A549 (cell line): ENCODE measurements at regions of chr12 and their contacts with region 1.

Region 1: DNA sequence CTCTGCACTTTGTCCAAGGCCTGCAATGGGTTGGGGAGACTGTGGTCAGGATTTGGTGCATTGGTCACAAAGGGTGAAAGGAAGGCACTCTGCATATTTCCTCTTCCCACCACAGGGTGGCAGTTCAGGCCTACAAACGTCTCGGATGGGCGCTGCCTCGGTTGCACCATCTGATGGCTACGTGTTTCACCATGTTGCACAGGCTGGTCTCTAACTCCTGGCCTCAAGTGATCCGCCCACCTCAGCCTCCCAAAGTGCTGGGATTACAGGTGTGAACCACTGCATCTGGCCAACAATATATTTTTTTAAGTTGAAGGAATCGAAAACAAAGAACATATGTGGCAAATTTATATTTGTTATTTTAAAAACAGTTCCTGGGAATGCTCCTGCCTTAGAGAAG is 35.1 kb downstream of the TMBIM6 start:
- DNase-seq: peak; percentile 83
- ATAC-seq: peak; percentile 93
- H3K4me3 ChIP-seq: no peak overlapping the region
- H3K27ac ChIP-seq: peak overlapping the region; percentile 25 to 67; a peak in 5 of 6 replicates
- H3K4me1 ChIP-seq: no peaks in the 10 kb centered on the region
- CTCF ChIP-seq: peak; percentile 90
- EP300 ChIP-seq: no peak
- POLR2A ChIP-seq: no peak
- RAD21 ChIP-seq: peak; percentile 92 to 97

Region 2: DNA sequence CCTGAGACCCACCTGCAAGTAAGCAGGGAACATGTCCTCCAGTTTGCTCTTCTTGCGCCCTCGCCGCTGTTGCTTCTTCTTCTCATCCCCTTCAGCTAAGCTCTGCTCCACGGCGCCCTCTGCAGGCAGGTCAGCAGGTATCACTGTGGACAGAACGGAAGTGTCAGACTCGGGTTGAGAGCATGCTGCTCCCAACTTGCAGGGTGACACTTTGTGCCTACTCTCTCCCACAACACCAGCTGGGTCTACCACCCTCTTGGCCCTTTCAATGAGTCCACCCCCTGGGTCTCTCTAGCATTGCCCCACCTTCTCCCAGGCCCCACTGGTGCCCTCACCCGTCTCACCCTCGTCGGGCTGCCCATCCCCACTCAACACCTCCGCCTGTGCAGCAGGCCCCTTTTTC is 732.6 kb before region 1 on chr12:
- CTCF ChIA-PET with region 1: no interaction called
- POLR2A ChIA-PET with region 1: no interaction called
- DNase-seq: peak; percentile 73 to 74
- ATAC-seq: peak; percentile 62 to 86; a peak in 5 of 6 replicates
- H3K4me3 ChIP-seq: no peak overlapping the region
- H3K27ac ChIP-seq: no peak overlapping the region
- H3K4me1 ChIP-seq: no peaks in the 10 kb centered on the region
- CTCF ChIP-seq: peak; percentile 55
- EP300 ChIP-seq: no peak
- POLR2A ChIP-seq: no peak
- RAD21 ChIP-seq: no peak

Region 3: GRCh38 chr12:49644620-49644994 is 131.8 kb before region 1 on chr12:
- CTCF ChIA-PET with region 1: interaction called, 19 read pairs
- POLR2A ChIA-PET with region 1: interaction called, 3 read pairs
- DNase-seq: peak; percentile 68 to 86
- ATAC-seq: peak; percentile 68 to 92; a peak in 5 of 6 replicates
- H3K4me3 ChIP-seq: no peak overlapping the region
- H3K27ac ChIP-seq: no peak overlapping the region
- H3K4me1 ChIP-seq: no peaks in the 10 kb centered on the region
- CTCF ChIP-seq: peak; percentile 90
- EP300 ChIP-seq: no peak
- POLR2A ChIP-seq: no peak
- RAD21 ChIP-seq: peak; percentile 87 to 96

Region 4: GRCh38 chr12:49763006-49763591 is 13.3 kb before region 1 on chr12:
- CTCF ChIA-PET with region 1: interaction called, 24 read pairs
- POLR2A ChIA-PET with region 1: no interaction called
- DNase-seq: peak; percentile 67 to 81
- ATAC-seq: peak; percentile 83 to 84
- H3K4me3 ChIP-seq: no peak overlapping the region
- H3K27ac ChIP-seq: no peak overlapping the region
- H3K4me1 ChIP-seq: no peaks in the 10 kb centered on the region
- CTCF ChIP-seq: peak; percentile 82
- EP300 ChIP-seq: no peak
- POLR2A ChIP-seq: no peak
- RAD21 ChIP-seq: peak in 1 of 2 experiments; percentile 9; a peak in 1 of 5 replicates

Region 5: GRCh38 chr12:49800421-49801140 is 24.2 kb after region 1 on chr12:
- CTCF ChIA-PET with region 1: interaction called, 27 read pairs
- POLR2A ChIA-PET with region 1: no interaction called
- DNase-seq: no peak
- ATAC-seq: no peak
- H3K4me3 ChIP-seq: no peak overlapping the region
- H3K27ac ChIP-seq: peak overlapping the region in 1 of 2 experiments; percentile 66; a peak in 3 of 6 replicates
- H3K4me1 ChIP-seq: 0 out of 3 replicates have a peak, but pooled peaks cover 6% of the 10 kb centered on the region
- CTCF ChIP-seq: no peak
- EP300 ChIP-seq: no peak
- POLR2A ChIP-seq: no peak
- RAD21 ChIP-seq: no peak

Region 6: DNA sequence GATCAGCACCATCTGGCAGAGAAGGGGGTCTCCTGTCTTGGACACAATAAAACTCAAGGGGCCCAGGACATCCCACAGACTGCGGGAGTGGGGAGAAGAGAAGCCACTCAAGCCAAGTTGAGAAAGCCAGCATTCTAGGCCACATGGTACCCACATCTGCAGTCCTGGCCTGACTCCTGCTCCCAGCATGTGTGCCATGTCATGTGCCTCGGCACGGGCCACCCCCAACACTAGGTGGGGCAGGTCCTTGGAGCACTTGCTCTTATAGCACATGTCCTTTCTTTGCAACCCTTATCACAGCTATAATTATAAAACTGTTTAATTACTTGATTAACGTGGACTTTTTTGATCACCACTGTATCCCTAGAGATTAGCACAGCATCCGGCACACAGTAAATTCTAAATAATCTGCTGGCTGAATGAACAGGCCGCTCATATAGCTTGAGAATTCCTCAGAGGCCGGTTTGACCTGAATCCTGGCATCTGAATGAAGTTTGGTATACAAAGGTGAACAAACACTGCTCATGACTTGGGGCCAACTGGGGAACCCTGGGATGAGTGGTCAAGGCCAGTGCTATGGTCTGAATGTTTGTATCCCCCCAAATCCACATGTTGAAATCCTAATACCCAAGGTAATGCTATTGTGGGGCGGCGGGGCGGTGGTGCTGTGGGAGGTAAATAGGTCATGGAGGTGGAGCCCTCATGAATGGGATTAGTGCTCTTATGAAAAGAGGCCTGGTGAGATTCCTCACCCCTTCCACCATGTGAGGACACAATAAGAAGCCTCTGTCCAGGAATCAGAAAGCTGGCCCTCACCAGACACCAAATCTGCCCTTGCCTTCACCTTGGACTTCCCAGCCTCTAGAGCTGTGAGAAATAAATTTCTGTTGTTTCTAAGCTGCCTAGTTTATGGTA is 45.2 kb after region 1 on chr12:
- CTCF ChIA-PET with region 1: interaction called, 15 read pairs
- POLR2A ChIA-PET with region 1: no interaction called
- DNase-seq: no peak
- ATAC-seq: no peak
- H3K4me3 ChIP-seq: no peak overlapping the region
- H3K27ac ChIP-seq: no peak overlapping the region
- H3K4me1 ChIP-seq: peaks cover 4% of the 10 kb centered on the region; the same call in 1 of the 3 replicates
- CTCF ChIP-seq: no peak
- EP300 ChIP-seq: no peak
- POLR2A ChIP-seq: no peak
- RAD21 ChIP-seq: no peak